Spleen (tissue), 13 donors: ENCODE measurements at regions of chr16 and their contacts with region 1.

Region 1: GRCh38 chr16:28277537-28278388 is 14.6 kb upstream of the SBK1 start:
- DNase-seq: peak; percentile 97
- H3K4me3 ChIP-seq: peak overlapping the region in 7 of 8 donors; percentile 18 to 67 (median 25)
- H3K27ac ChIP-seq: peak overlapping the region in 6 of 8 donors; percentile 0 to 63 (median 26)
- H3K4me1 ChIP-seq: peaks cover 3 to 15% (median 11%) of the 10 kb centered on the region in 6 donors
- H3K27me3 ChIP-seq: peaks cover 0 to 38% (median 0%) of the 10 kb centered on the region in 7 donors
- CTCF ChIP-seq: peak; percentile 92 to 99 (median 97)
- POLR2A ChIP-seq: no peak

Region 2: GRCh38 chr16:27991876-27992275 is 285.9 kb before region 1 on chr16:
- intact Hi-C with region 1: no loop called
- DNase-seq: peak; percentile 7
- H3K4me3 ChIP-seq: no peak overlapping the region
- H3K27ac ChIP-seq: no peak overlapping the region
- H3K4me1 ChIP-seq: no peaks in the 10 kb centered on the region
- H3K27me3 ChIP-seq: no peaks in the 10 kb centered on the region
- CTCF ChIP-seq: no peak
- POLR2A ChIP-seq: no peak

Region 3: GRCh38 chr16:28181515-28181914 is 96.2 kb before region 1 on chr16:
- intact Hi-C with region 1: no loop called
- DNase-seq: no peak
- H3K4me3 ChIP-seq: peak overlapping the region in 1 of 8 donors; percentile 48
- H3K27ac ChIP-seq: peak overlapping the region in 7 of 8 donors; percentile 55 to 88 (median 78)
- H3K4me1 ChIP-seq: peaks cover 36 to 96% (median 76%) of the 10 kb centered on the region in 6 donors
- H3K27me3 ChIP-seq: no peaks in the 10 kb centered on the region
- CTCF ChIP-seq: no peak
- POLR2A ChIP-seq: no peak

Region 4: DNA sequence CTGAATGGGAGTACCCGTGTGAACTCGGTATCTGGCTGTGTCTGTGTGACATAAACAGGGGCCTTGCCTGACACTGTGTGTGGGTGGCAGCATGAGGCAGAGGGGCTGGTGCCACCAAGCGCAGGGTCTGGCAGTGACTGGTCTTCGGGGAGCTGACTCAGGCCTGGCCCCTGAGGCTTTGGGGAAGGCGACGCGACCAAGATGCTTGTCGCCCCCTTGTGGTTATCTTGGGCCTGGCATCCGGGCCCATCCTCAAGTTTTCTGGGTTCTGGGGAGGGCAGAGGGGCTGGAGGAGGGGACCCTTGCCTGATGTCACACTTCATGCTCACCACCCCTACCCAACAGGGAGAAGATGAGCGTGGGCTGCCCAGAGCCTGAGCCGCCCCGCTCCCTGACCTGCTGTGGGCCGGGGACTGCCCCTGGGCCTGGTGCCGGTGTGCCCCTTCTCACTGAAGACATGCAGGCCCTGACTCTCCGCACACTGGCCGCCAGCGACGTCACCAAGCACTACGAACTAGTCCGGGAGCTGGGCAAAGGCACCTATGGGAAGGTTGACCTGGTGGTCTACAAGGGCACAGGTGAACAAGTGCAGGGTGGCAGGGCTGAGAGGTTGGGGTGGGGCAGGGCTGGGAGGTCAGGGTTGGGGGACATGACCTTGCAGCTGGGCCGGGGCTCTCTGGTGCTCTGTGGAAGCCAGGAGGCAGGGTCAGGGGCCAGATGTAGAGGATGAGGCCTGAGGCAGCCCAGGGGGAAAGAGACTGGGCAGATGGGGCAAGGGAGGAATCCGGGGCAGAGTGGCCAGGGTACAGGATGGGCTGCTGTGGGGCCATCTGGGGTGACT is 39.5 kb after region 1 on chr16:
- intact Hi-C with region 1: loop called (anchors 2 kb)
- DNase-seq: peak; percentile 90
- H3K4me3 ChIP-seq: no peak overlapping the region
- H3K27ac ChIP-seq: no peak overlapping the region
- H3K4me1 ChIP-seq: peaks cover 0 to 20% (median 5%) of the 10 kb centered on the region in 6 donors
- H3K27me3 ChIP-seq: no peaks in the 10 kb centered on the region
- CTCF ChIP-seq: peak; percentile 77 to 95 (median 90)
- POLR2A ChIP-seq: no peak